ENCODE measurements at regions of chr7 and their contacts with region 1.

Region 1: GRCh38 chr7:25851332-25852210 is 300.4 kb upstream of the NFE2L3 start:
- DNase-seq: peak; percentile 88
- ATAC-seq: peak; percentile 62
- H3K4me3 Mint-ChIP-seq: peak overlapping the region; percentile 74
- H3K27ac Mint-ChIP-seq: no peak overlapping the region
- H3K4me1 Mint-ChIP-seq: peaks cover 18% of the 10 kb centered on the region
- H3K27me3 Mint-ChIP-seq: peaks cover 37% of the 10 kb centered on the region
- CTCF ChIP-seq: peak; percentile 86

Region 2: DNA sequence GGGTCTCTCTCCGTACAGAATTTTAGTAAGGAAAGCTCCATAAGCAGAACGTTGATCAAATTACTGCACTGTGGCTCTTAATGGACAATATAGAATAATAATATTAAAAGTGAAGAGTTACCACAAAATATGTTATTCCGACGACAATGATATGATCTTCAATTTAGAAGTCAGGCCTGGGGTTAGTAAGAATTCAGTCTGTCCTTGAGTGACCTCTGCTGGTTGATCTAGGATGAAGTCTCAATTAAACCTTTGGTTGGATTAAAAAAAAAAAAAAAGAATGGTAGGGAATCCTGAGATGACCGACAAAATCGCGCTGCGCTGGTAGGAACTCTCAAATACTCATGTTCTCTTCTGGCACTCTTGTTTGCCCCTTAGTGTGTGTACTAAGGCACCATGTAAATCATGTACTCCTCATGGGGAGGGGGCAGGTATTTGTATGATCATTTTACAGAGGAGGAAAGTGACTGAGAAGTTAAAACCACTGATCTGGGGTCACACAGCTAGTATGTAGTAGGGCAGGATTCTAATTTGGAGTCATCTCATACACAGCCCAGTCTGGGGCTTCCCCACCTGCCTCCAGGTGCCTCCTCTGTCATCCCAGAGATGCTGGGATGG is 462.0 kb before region 1 on chr7:
- CTCF ChIA-PET with region 1: interaction called, 25 read pairs
- POLR2A ChIA-PET with region 1: no interaction called
- DNase-seq: no peak
- ATAC-seq: peak; percentile 62; the same call in 1 of the 2 replicates
- H3K4me3 Mint-ChIP-seq: no peak overlapping the region
- H3K27ac Mint-ChIP-seq: no peak overlapping the region
- H3K4me1 Mint-ChIP-seq: peaks cover 6% of the 10 kb centered on the region
- H3K27me3 Mint-ChIP-seq: no peaks in the 10 kb centered on the region
- CTCF ChIP-seq: no peak

Region 3: GRCh38 chr7:25574828-25575227 is 276.7 kb before region 1 on chr7:
- CTCF ChIA-PET with region 1: interaction called, 74 read pairs
- POLR2A ChIA-PET with region 1: no interaction called
- DNase-seq: no peak
- ATAC-seq: no peak
- H3K4me3 Mint-ChIP-seq: no peak overlapping the region
- H3K27ac Mint-ChIP-seq: no peak overlapping the region
- H3K4me1 Mint-ChIP-seq: peaks cover 4% of the 10 kb centered on the region
- H3K27me3 Mint-ChIP-seq: peaks cover 74% of the 10 kb centered on the region
- CTCF ChIP-seq: no peak

Region 4: DNA sequence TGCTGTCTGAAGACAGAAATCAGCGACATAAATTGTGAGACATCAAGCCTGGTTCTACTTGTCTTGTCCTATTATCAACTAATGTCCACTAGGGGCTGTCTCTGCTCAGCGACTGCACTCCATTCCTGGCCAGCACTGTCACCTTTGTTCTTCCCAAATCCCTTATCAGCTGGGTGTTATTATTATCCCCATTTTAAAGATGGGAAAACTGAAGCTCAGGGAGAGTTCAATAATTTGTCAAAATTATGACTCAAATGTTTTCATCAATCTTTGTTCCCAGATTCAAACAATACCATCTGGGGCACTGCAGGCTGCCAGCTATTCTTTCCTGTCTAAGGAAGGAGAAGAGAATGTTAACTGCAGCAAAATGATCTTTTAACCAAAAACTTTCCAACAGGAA is 131.1 kb before region 1 on chr7:
- CTCF ChIA-PET with region 1: interaction called, 21 read pairs
- POLR2A ChIA-PET with region 1: no interaction called
- DNase-seq: no peak
- ATAC-seq: peak; percentile 74; the same call in 1 of the 2 replicates
- H3K4me3 Mint-ChIP-seq: no peak overlapping the region
- H3K27ac Mint-ChIP-seq: no peak overlapping the region
- H3K4me1 Mint-ChIP-seq: peaks cover 11% of the 10 kb centered on the region
- H3K27me3 Mint-ChIP-seq: no peaks in the 10 kb centered on the region
- CTCF ChIP-seq: no peak

Region 5: DNA sequence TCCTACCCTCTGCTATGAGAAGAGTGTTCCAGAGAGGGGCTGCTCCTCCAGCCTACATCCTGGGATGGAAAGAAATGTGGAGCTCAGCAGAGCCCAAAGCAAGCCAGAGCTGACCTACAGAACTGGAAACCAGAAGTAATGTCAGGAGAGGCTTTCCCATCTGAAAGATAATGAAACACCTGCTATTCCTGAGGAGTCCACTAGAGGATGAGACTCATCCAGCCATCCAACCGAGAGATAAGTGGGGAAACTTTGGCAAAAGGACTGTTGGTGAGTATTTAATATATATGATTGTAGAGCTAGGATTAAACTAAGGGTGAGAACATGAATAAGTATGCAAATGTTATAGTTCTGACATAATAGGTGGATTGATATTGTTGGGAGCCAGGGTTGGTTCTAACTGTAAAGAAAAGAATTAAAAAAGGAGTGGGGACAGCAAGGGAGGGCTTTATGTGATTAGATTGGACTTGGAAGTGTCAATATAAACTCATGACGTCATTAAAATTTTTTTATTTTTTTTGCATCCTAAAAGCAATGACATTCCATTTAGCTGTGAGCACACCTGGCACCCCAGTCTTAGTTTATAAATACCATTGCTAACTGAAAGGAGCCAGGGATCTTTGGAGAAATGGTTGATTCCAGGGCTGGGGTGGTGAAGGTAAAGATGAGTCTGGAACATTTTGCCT is 12.3 kb before region 1 on chr7:
- CTCF ChIA-PET with region 1: interaction called, 20 read pairs
- POLR2A ChIA-PET with region 1: no interaction called
- DNase-seq: no peak
- ATAC-seq: peak; percentile 86
- H3K4me3 Mint-ChIP-seq: no peak overlapping the region
- H3K27ac Mint-ChIP-seq: no peak overlapping the region
- H3K4me1 Mint-ChIP-seq: peaks cover 14% of the 10 kb centered on the region
- H3K27me3 Mint-ChIP-seq: no peaks in the 10 kb centered on the region
- CTCF ChIP-seq: no peak; the same call in 1 of the 2 replicates

Region 6: GRCh38 chr7:25876092-25876491 is 24.5 kb after region 1 on chr7:
- CTCF ChIA-PET with region 1: no interaction called
- POLR2A ChIA-PET with region 1: no interaction called
- DNase-seq: no peak
- ATAC-seq: no peak
- H3K4me3 Mint-ChIP-seq: no peak overlapping the region
- H3K27ac Mint-ChIP-seq: no peak overlapping the region
- H3K4me1 Mint-ChIP-seq: peaks cover 17% of the 10 kb centered on the region
- H3K27me3 Mint-ChIP-seq: peaks cover 23% of the 10 kb centered on the region
- CTCF ChIP-seq: no peak